Panc1 (cell line): ENCODE measurements at regions of chr6 and their contacts with region 1.

Region 1: DNA sequence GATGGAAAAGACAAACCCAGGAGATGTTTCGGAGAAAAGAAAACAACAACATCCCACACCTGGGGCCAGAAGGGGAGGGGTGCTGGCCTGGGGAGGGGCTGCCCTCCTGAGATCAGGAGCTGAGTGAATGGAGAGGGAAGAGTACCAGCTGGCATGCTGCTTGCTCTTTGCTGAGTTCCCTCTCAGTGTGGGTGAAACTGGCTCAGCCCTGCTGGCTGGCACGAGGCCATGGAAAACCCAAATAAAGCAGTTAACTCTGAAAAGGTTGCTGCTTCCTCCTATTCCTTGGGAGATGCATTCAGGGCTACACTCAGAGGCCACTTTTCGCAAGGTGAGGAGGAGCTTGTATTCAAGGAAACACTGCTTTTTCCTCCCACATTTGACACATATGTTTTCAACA is 8.0 kb upstream of the KCNK16 start:
- DNase-seq: no peak
- ATAC-seq: no peak
- H3K4me3 ChIP-seq: no peak overlapping the region
- H3K27ac ChIP-seq: no peak overlapping the region
- H3K4me1 ChIP-seq: no peaks in the 10 kb centered on the region
- H3K27me3 ChIP-seq: peaks cover 6% of the 10 kb centered on the region
- CTCF ChIP-seq: no peak

Region 2: DNA sequence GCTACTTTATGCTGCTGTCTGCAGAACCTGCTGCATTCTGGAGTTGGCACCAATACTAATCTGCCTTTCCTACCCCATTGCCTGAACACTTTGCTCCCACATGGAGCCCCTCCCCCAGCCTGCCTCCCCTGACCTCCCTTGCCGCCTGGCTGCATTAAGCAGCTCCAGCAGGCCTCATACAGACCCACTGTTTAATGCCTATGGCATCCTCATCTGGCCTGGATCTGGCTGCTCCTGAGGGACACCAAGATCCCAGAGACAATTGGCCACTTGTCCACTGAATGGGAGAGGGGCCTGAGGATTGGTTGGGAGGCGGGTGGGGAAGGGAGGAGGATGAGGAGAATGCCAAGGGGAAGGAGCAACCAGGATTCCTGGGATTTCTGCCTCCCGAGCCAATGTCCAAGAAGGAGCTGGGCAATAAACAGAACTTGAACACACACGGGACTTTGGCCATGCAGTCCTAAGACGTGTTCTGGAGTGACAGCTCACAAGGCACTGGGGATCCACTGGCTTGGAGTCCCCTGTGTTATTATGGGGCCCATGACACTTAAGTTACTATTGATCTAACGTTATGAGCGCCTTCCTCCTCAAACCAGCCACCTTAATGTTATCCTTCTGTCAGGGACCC is 90.8 kb before region 1 on chr6:
- CTCF ChIA-PET with region 1: no interaction called
- POLR2A ChIA-PET with region 1: no interaction called
- in situ Hi-C with region 1: no loop called
- intact Hi-C with region 1: no loop called
- DNase-seq: no peak
- ATAC-seq: no peak
- H3K4me3 ChIP-seq: no peak overlapping the region
- H3K27ac ChIP-seq: no peak overlapping the region
- H3K4me1 ChIP-seq: no peaks in the 10 kb centered on the region
- H3K27me3 ChIP-seq: 0 out of 2 replicates have a peak, but pooled peaks cover 3% of the 10 kb centered on the region
- CTCF ChIP-seq: no peak

Region 3: GRCh38 chr6:39812853-39813533 is 482.5 kb after region 1 on chr6:
- CTCF ChIA-PET with region 1: no interaction called
- POLR2A ChIA-PET with region 1: interaction called, 12 read pairs
- in situ Hi-C with region 1: no loop called
- intact Hi-C with region 1: no loop called
- DNase-seq: no peak
- ATAC-seq: no peak
- H3K4me3 ChIP-seq: no peak overlapping the region
- H3K27ac ChIP-seq: no peak overlapping the region
- H3K4me1 ChIP-seq: no peaks in the 10 kb centered on the region
- H3K27me3 ChIP-seq: no peaks in the 10 kb centered on the region
- CTCF ChIP-seq: no peak

Region 4: DNA sequence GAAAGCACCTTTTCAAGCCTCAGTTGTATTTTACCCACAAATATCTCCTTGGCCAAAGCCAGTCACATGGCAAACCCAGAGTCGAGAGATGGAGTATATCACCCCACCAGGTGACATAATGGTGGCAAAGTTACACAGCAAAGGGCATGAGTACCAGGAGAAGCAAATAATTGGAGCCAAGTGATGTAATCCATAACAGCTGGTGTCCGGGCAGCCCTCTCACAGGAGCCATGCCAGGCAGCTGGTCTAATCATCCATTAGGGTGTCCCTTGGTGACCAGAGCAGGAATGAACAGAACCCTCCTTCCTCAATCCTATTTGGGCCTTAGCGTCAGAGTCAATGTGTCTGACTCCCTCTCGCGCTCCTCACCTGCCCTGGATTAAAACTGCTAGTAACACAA is 984.6 kb after region 1 on chr6:
- CTCF ChIA-PET with region 1: no interaction called
- POLR2A ChIA-PET with region 1: interaction called, 13 read pairs
- in situ Hi-C with region 1: no loop called
- intact Hi-C with region 1: no loop called
- DNase-seq: no peak
- ATAC-seq: no peak
- H3K4me3 ChIP-seq: no peak overlapping the region
- H3K27ac ChIP-seq: no peak overlapping the region
- H3K4me1 ChIP-seq: no peaks in the 10 kb centered on the region
- H3K27me3 ChIP-seq: peaks cover 10% of the 10 kb centered on the region
- CTCF ChIP-seq: no peak